ENCODE measurements at regions of chr9 and their contacts with region 1.

Region 1: DNA sequence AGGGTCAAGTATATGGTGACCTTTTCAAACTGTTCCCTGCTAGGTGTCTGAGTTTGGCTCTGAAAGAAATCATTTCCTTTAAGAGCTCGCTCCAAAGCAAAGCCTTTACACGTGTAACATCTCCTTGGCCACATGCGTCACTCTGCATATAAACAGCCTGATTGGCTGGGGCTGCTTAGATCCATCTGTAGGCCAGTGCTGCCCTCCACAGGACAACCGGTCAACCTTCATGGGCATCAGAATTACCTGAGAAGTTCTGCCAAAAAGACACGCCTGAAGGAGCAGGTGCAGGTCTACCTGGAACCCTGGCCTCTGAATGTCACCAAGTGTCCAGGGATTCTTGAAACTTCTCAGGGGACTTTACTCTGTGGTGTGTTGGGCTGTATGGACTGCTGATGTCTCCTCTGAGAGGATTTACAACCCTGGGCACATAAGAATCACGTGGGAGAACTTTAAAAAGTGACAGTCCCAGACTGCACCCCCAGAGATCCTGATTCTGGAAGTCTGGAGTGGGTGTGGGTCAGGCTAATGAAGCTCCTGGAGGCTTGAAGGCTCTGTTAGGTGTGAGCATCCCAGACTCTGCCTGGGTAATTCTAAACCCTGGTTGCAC is 497.6 kb downstream of the GADD45G start:
- DNase-seq: peak; percentile 90
- ATAC-seq: peak; percentile 100
- H3K4me3 Mint-ChIP-seq: no peak overlapping the region
- H3K27ac Mint-ChIP-seq: no peak overlapping the region
- H3K4me1 Mint-ChIP-seq: peaks cover 3% of the 10 kb centered on the region
- H3K27me3 Mint-ChIP-seq: peaks cover 2% of the 10 kb centered on the region

Region 2: DNA sequence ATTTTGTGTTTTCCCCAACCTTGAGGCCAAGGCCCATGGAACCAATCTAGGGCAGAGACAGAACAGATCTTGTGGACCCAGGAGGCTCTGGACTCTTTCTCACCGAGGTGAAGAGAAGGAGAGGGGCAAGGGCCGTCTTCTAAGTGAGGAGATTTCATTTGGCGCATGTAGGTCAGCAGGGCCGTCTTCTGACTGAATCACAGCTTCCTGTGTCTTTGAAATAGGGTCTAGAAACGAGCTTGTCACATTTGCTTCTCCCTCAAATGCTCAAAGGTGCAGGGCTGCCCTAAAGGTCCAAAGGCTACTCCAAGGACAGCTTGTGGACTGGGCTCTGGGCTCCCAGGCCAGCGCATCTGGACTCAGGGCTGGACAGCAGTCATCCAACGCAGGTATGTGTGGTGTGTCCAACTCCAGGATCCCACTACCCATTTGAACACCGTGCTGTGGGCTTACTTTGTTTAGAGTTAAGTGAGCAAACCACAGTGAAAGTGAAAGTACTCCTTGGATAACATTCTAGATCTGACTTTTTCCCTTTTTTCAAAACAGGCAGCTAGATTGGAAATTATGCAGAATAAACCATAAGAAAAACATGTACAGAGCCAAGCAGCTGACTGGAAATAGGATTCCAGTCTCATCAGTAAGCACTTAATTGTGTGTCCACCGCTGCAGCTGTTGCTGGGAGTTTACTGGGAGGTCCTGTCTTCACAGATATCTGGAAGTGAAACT is 140.6 kb before region 1 on chr9:
- CTCF ChIA-PET with region 1: no interaction called
- POLR2A ChIA-PET with region 1: no interaction called
- intact Hi-C with region 1: no loop called
- DNase-seq: peak; percentile 21
- ATAC-seq: peak; percentile 89
- H3K4me3 Mint-ChIP-seq: no peak overlapping the region
- H3K27ac Mint-ChIP-seq: peak overlapping the region; percentile 45
- H3K4me1 Mint-ChIP-seq: peaks cover 19% of the 10 kb centered on the region
- H3K27me3 Mint-ChIP-seq: peaks cover 6% of the 10 kb centered on the region

Region 3: DNA sequence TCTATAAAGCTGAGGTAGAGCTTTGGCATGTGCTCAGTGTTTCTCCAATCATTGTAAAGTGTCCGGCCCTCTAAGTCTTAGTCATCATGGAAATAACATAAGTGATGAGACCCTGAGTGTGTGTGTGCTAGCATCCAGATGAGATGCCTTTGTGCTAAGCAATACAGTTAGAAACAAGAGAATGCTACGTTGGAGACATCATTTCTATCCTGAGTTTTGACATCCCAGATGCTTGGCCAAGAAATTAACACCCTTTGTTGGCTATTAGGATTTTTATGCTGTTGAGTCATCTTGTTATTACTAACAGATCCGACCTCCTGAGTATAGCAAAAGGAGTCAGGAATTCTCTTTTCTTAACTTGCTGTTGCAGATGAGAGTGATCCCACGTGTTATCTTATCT is 10.4 kb after region 1 on chr9:
- CTCF ChIA-PET with region 1: interaction called, 11 read pairs
- POLR2A ChIA-PET with region 1: interaction called, 3 read pairs
- intact Hi-C with region 1: no loop called
- DNase-seq: no peak
- ATAC-seq: no peak
- H3K4me3 Mint-ChIP-seq: no peak overlapping the region
- H3K27ac Mint-ChIP-seq: no peak overlapping the region
- H3K4me1 Mint-ChIP-seq: no peaks in the 10 kb centered on the region
- H3K27me3 Mint-ChIP-seq: peaks cover 8% of the 10 kb centered on the region